Endothelial cell of umbilical vein (primary cell): ENCODE measurements at regions of chr5 and their contacts with region 1.

Region 1: GRCh38 chr5:129664337-129664937 is 83.5 kb upstream of the MINAR2 start:
- DNase-seq: peak; percentile 80
- H3K4me3 ChIP-seq: no peak overlapping the region
- H3K27ac ChIP-seq: no peak overlapping the region
- H3K4me1 ChIP-seq: no peaks in the 10 kb centered on the region
- H3K27me3 ChIP-seq: no peaks in the 10 kb centered on the region
- CTCF ChIP-seq: peak; percentile 73 to 74
- POLR2A ChIP-seq: no peak

Region 2: GRCh38 chr5:129460936-129461711 is 203.3 kb before region 1 on chr5:
- CTCF ChIA-PET with region 1: no interaction called
- POLR2A ChIA-PET with region 1: no interaction called
- dilution Hi-C with region 1: no loop called
- intact Hi-C with region 1: loop called (anchors 5 kb)
- DNase-seq: peak; percentile 10
- H3K4me3 ChIP-seq: peak overlapping the region; percentile 21 to 41 (median 22)
- H3K27ac ChIP-seq: no peak overlapping the region
- H3K4me1 ChIP-seq: peaks cover 10% of the 10 kb centered on the region
- H3K27me3 ChIP-seq: peaks cover 32 to 54% of the 10 kb centered on the region in 2 experiments
- CTCF ChIP-seq: peak; percentile 14 to 42
- POLR2A ChIP-seq: no peak

Region 3: DNA sequence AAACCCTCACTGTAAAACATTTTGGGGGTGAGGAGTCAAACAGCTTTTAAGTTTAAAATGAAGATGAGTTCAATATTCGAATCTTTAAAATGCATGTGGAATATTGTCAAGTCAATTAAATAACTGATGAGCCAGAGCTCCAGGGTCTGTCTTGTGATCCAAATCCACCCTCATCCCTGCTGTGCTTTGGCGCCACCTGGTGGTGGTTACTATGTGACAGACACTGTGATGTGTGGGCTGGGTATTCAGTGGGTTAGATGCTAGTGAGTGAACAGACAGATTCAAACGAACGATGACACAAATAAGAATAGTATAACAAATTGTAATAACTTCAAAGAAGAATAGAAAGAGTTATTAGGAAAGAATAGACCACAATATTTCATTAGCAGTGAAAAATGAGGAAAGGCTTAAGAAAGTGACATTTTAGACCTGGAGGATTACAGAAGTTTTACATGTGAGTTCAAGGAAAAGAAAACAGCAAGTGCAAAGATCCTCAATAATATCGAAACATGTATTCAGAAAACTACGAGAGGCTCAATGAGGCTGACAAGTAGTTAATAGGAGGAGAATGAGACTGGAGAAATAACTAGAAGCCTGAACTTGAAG is 188.4 kb after region 1 on chr5:
- CTCF ChIA-PET with region 1: interaction called, 4 read pairs
- POLR2A ChIA-PET with region 1: no interaction called
- dilution Hi-C with region 1: no loop called
- intact Hi-C with region 1: loop called (anchors 2 kb)
- DNase-seq: peak; percentile 76
- H3K4me3 ChIP-seq: no peak overlapping the region
- H3K27ac ChIP-seq: no peak overlapping the region
- H3K4me1 ChIP-seq: peaks cover 10% of the 10 kb centered on the region
- H3K27me3 ChIP-seq: peaks cover 0 to 3% of the 10 kb centered on the region in 2 experiments
- CTCF ChIP-seq: peak; percentile 84 to 93
- POLR2A ChIP-seq: no peak

Region 4: DNA sequence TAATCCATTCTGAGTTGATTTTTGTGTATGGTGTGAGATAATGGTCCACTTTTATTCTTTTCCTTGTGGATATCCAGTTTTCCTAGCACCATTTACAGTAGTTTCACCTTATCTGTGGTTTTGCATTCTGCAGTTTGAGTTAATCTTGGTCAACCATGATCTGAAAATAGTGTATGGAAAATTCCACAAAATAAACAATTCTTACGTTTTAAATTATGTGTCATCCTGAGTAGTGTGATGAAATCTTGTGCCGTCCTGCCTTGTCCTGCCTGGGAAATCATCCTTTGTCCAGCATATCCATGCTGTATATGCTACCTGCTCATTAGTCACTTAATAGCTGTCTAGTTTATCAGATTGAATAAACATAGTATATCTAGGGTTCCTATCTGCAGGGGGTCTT is 1641.5 kb after region 1 on chr5:
- CTCF ChIA-PET with region 1: no interaction called
- POLR2A ChIA-PET with region 1: no interaction called
- dilution Hi-C with region 1: no loop called
- intact Hi-C with region 1: no loop called
- DNase-seq: no peak
- H3K4me3 ChIP-seq: no peak overlapping the region
- H3K27ac ChIP-seq: no peak overlapping the region
- H3K4me1 ChIP-seq: no peaks in the 10 kb centered on the region
- H3K27me3 ChIP-seq: no peaks in the 10 kb centered on the region
- CTCF ChIP-seq: no peak
- POLR2A ChIP-seq: no peak

Region 5: GRCh38 chr5:131595088-131596033 is 1930.9 kb after region 1 on chr5:
- CTCF ChIA-PET with region 1: no interaction called
- POLR2A ChIA-PET with region 1: no interaction called
- dilution Hi-C with region 1: no loop called
- intact Hi-C with region 1: no loop called
- DNase-seq: no peak
- H3K4me3 ChIP-seq: no peak overlapping the region
- H3K27ac ChIP-seq: no peak overlapping the region
- H3K4me1 ChIP-seq: no peaks in the 10 kb centered on the region
- H3K27me3 ChIP-seq: no peaks in the 10 kb centered on the region
- CTCF ChIP-seq: no peak
- POLR2A ChIP-seq: no peak